Activated CD8-positive, alpha-beta T cell treated with anti-CD3 and anti-CD28 coated beads, Interleukin-2, amount 10 ng/mL, durations not matched to agents 7 days and 5 days (primary cell): ENCODE measurements at regions of chr19 and their contacts with region 1.

Region 1: GRCh38 chr19:11090054-11090900 is 1.0 kb downstream of the LDLR start:
- DNase-seq: peak; percentile 99
- ATAC-seq: peak; percentile 87
- H3K4me3 Mint-ChIP-seq: peak overlapping the region; percentile 95
- H3K27ac Mint-ChIP-seq: peak overlapping the region; percentile 99
- H3K4me1 Mint-ChIP-seq: peaks cover 51% of the 10 kb centered on the region
- H3K27me3 Mint-ChIP-seq: no peaks in the 10 kb centered on the region

Region 2: GRCh38 chr19:11014403-11014911 is 75.8 kb before region 1 on chr19:
- CTCF ChIA-PET with region 1: no interaction called
- POLR2A ChIA-PET with region 1: no interaction called
- DNase-seq: no peak
- ATAC-seq: no peak
- H3K4me3 Mint-ChIP-seq: no peak overlapping the region
- H3K27ac Mint-ChIP-seq: no peak overlapping the region
- H3K4me1 Mint-ChIP-seq: no peaks in the 10 kb centered on the region
- H3K27me3 Mint-ChIP-seq: no peaks in the 10 kb centered on the region

Region 3: GRCh38 chr19:11035441-11036377 is 54.6 kb before region 1 on chr19:
- CTCF ChIA-PET with region 1: interaction called, 30 read pairs
- POLR2A ChIA-PET with region 1: interaction called, 18 read pairs
- DNase-seq: peak; percentile 91
- ATAC-seq: peak; percentile 98
- H3K4me3 Mint-ChIP-seq: no peak overlapping the region
- H3K27ac Mint-ChIP-seq: peak overlapping the region; percentile 39
- H3K4me1 Mint-ChIP-seq: peaks cover 8% of the 10 kb centered on the region
- H3K27me3 Mint-ChIP-seq: no peaks in the 10 kb centered on the region

Region 4: DNA sequence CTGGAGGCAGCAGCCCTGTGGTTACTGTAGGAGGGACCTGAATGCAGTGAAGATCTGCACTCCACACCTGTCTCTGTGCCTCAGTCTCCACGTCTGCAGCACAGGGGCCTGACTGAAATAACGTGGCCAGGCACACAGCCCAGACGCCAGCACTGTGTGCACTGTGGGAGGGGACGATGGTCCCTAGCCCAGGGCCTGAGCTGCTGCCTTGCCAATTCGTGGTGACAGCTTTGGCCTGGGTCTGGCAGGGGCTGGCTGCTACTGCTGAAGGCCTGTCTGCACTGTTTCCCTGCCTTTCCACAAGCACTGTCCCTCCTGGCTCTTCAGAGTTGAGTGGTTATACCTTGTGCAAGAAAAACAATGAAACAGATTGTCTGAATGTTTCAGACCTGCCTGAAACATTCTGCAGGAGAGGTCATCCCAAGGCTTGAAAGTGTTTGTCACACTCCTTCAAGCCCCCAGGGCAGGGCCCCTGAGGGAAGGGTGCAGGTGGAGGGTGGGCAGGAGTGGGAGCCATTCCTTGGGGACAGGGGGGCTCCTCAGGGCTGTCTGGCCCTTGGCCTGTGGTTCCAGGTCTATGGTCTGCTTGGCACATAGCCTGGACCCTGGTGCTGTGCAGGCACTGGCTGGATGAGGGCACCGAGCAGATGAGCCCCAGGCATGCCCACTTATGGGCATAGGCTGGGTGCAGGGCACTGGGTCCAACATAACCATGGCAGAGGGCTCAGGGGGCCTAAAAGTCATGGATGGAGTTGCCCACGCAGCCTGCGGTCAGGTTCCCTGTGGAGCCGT is 39.8 kb before region 1 on chr19:
- CTCF ChIA-PET with region 1: no interaction called
- POLR2A ChIA-PET with region 1: interaction called, 12 read pairs
- DNase-seq: no peak
- ATAC-seq: no peak
- H3K4me3 Mint-ChIP-seq: no peak overlapping the region
- H3K27ac Mint-ChIP-seq: peak overlapping the region; percentile 93
- H3K4me1 Mint-ChIP-seq: peaks cover 29% of the 10 kb centered on the region
- H3K27me3 Mint-ChIP-seq: no peaks in the 10 kb centered on the region

Region 5: GRCh38 chr19:11125994-11126685 is 35.9 kb after region 1 on chr19:
- CTCF ChIA-PET with region 1: interaction called, 24 read pairs
- POLR2A ChIA-PET with region 1: interaction called, 5 read pairs
- DNase-seq: peak; percentile 82
- ATAC-seq: peak; percentile 63
- H3K4me3 Mint-ChIP-seq: no peak overlapping the region
- H3K27ac Mint-ChIP-seq: no peak overlapping the region
- H3K4me1 Mint-ChIP-seq: peaks cover 2% of the 10 kb centered on the region
- H3K27me3 Mint-ChIP-seq: no peaks in the 10 kb centered on the region

Region 6: DNA sequence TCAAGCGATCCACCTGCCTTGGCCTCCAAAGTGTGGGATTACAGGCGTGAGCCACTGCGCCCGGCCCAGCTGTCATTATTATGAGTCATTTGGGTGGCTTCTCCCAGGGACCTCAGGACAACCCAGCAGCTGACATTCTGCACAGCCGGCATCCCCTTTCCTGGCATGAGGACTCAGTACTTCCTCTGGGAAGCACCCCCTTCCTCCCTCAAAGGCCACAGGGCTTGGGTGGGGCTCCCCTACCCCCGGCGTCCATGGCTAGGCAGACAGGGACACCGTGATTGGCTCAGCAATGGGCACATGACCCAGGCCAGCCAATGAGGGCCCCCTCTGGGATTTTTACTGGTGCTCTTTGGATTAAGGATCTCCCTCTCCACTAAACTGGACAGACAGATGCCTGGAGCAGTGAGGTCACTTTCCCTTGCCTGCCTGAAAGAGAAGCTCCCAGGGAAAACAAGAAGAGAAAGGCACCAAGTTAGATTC is 101.0 kb after region 1 on chr19:
- CTCF ChIA-PET with region 1: no interaction called
- POLR2A ChIA-PET with region 1: no interaction called
- DNase-seq: no peak
- ATAC-seq: no peak
- H3K4me3 Mint-ChIP-seq: no peak overlapping the region
- H3K27ac Mint-ChIP-seq: no peak overlapping the region
- H3K4me1 Mint-ChIP-seq: peaks cover 12% of the 10 kb centered on the region
- H3K27me3 Mint-ChIP-seq: peaks cover 6% of the 10 kb centered on the region